Activated B cell treated with CpG ODN at 0.5 μM for 24 hours (primary cell): ENCODE measurements at regions of chr5 and their contacts with region 1.

Region 1: DNA sequence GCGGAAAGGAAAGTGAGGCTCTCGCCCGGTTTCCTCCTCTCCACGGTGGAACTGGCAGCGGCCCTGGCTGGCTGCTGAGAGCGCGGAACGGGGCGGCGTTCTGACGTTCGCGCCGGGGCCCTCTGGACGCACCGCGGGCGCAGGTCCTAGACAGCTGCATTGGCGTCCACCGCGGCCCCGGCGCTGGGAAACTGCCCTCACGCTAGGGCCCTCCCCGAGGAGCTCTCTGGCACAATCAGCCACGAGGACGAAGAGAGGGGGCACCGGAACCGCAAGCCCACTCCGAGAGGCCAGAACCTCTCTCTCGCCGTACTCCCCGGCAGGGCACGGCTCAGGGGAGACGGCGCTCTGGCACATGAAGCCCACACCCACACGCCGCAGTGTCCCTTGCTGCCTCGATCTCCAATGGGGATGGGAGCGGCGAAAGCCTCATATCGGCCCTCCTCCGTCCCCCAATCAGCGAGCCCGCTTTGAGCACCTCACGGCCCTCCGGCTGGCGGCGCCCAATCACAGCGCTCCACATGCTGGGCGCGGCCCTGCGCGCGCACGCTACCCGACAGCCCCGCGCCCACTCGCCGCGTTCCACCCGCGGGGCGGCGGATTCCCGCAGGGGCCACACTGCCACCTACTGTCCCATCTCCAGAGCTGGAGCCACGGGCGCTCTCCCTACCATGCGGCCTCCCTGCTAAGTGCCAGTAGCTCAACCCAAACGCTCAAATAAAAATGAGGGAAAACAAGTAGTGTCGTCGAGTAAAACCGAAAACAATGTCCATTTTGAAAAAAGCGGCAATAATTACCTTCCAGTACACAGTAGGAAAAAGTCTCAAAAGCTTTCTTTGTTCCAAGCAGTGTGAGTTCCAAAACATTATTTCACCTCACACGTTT is 11.8 kb downstream of the MRPS27 start:
- DNase-seq: peak; percentile 95
- ATAC-seq: peak; percentile 95
- H3K4me3 Mint-ChIP-seq: peak overlapping the region; percentile 92
- H3K27ac Mint-ChIP-seq: peak overlapping the region; percentile 97
- H3K4me1 Mint-ChIP-seq: peaks cover 46% of the 10 kb centered on the region
- H3K27me3 Mint-ChIP-seq: no peaks in the 10 kb centered on the region
- CTCF ChIP-seq: peak; percentile 24

Region 2: GRCh38 chr5:71455427-71456361 is 852.5 kb before region 1 on chr5 and contains the start of gene BDP1:
- CTCF ChIA-PET with region 1: no interaction called
- POLR2A ChIA-PET with region 1: interaction called, 5 read pairs
- intact Hi-C with region 1: loop called (anchors 5 kb)
- DNase-seq: peak; percentile 96
- ATAC-seq: peak; percentile 84
- H3K4me3 Mint-ChIP-seq: peak within 1 kb of the TSS; percentile 97
- H3K27ac Mint-ChIP-seq: peak within 1 kb of the TSS; percentile 97
- H3K4me1 Mint-ChIP-seq: peaks cover 23% of the 10 kb centered on the region
- H3K27me3 Mint-ChIP-seq: peaks cover 7% of the 10 kb centered on the region
- CTCF ChIP-seq: no peak
- total RNA-seq, gene BDP1: 46.2 and 50.4 TPM in 2 replicates

Region 3: DNA sequence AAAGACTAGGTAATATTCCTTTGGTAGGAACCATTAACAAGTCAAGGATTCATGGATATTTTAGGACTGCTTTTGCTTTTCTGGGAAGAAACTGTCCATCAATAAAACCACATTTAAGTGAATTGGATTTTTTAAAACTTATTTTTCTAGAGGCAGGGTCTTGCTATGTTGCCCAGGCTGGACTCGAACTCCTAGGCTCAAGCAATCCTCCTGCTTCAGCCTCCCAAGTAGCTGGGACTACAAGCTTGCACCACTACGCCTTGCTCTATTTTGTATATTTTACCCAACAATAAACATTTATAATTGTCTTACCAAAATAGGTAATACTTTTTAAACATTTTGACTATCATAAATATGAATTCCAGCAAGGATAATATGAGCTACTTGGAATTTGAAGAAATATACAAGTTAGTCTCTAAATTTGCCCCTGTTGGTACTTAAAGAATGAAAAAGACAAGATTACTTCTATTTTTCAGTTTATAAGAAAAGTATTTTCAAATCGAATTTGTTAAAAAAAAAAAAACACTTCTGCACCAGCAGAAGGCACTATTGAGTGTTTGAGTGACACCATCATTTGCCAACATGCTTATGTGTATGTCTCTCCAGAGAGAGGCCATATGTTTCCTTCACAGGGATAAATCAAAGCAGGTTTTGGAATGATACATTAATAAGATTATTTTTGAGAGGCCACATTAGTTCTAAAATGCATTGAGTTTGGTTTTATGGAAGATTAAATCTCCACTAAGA is 649.1 kb before region 1 on chr5:
- CTCF ChIA-PET with region 1: interaction called, 3 read pairs
- POLR2A ChIA-PET with region 1: no interaction called
- intact Hi-C with region 1: loop called (anchors 10 kb)
- DNase-seq: no peak
- ATAC-seq: no peak
- H3K4me3 Mint-ChIP-seq: no peak overlapping the region
- H3K27ac Mint-ChIP-seq: no peak overlapping the region
- H3K4me1 Mint-ChIP-seq: no peaks in the 10 kb centered on the region
- H3K27me3 Mint-ChIP-seq: no peaks in the 10 kb centered on the region
- CTCF ChIP-seq: no peak

Region 4: GRCh38 chr5:72234265-72234700 is 73.9 kb before region 1 on chr5:
- CTCF ChIA-PET with region 1: interaction called, 3 read pairs
- POLR2A ChIA-PET with region 1: interaction called, 3 read pairs
- intact Hi-C with region 1: loop called (anchors 2 kb)
- DNase-seq: no peak
- ATAC-seq: peak; percentile 56
- H3K4me3 Mint-ChIP-seq: no peak overlapping the region
- H3K27ac Mint-ChIP-seq: no peak overlapping the region
- H3K4me1 Mint-ChIP-seq: peaks cover 22% of the 10 kb centered on the region
- H3K27me3 Mint-ChIP-seq: no peaks in the 10 kb centered on the region
- CTCF ChIP-seq: no peak

Region 5: GRCh38 chr5:72280581-72281170 is 27.5 kb before region 1 on chr5:
- CTCF ChIA-PET with region 1: interaction called, 6 read pairs
- POLR2A ChIA-PET with region 1: interaction called, 6 read pairs
- intact Hi-C with region 1: loop called (anchors 1 kb)
- DNase-seq: no peak
- ATAC-seq: peak; percentile 28
- H3K4me3 Mint-ChIP-seq: no peak overlapping the region
- H3K27ac Mint-ChIP-seq: no peak overlapping the region
- H3K4me1 Mint-ChIP-seq: peaks cover 15% of the 10 kb centered on the region
- H3K27me3 Mint-ChIP-seq: no peaks in the 10 kb centered on the region
- CTCF ChIP-seq: no peak

Region 6: DNA sequence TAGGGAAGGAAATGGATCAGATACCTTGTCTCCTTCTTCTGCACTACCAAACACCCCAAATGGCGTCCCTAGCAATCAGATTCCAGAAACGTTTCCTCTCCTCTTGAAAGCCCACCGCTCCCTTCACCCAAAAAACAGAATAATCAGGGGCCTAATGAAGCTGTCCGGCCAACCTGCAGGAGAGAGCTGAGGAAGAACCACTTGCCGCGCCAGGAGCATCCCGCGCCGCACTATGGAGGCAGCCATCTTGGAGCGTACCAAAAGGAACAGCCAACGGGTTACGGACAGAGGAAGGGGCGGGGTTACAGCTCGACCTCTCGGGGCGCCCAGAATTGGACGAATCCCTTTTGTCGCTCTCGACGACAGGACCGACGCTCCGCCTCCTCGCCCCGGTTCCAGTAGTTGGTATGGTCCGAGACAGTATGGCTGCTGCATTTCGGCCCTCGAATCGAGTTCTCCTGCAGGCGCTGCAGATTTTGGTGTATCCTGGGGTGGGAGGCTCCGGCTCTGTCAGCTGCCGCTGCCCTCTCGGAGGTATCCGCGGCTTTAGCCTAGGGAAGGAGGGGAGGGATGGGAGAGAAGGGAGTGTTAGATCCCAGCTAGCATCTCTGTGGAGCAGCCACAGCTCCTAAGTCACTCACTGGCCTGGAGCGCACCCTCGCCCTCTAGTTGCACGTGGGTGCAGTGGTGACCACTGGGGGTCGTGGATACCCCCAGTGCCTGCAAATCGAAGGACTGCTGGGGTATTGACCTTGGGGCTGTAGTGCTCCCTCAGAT is 12.0 kb after region 1 on chr5 and contains the starts of genes MRPS27 and PTCD2:
- CTCF ChIA-PET with region 1: interaction called, 28 read pairs
- POLR2A ChIA-PET with region 1: interaction called, 74 read pairs
- intact Hi-C with region 1: loop called (anchors 1 kb)
- DNase-seq: peak; percentile 79
- ATAC-seq: peak; percentile 99
- H3K4me3 Mint-ChIP-seq: peak within 1 kb of the TSS; percentile 98
- H3K27ac Mint-ChIP-seq: peak within 1 kb of the TSS; percentile 93
- H3K4me1 Mint-ChIP-seq: peaks cover 25% of the 10 kb centered on the region
- H3K27me3 Mint-ChIP-seq: no peaks in the 10 kb centered on the region
- CTCF ChIP-seq: no peak
- total RNA-seq, gene MRPS27: 69.2 and 71.6 TPM in 2 replicates
- total RNA-seq, gene PTCD2: 6.2 and 8.9 TPM in 2 replicates

Region 7: GRCh38 chr5:72883864-72884263 is 575.7 kb after region 1 on chr5:
- CTCF ChIA-PET with region 1: no interaction called
- POLR2A ChIA-PET with region 1: no interaction called
- intact Hi-C with region 1: no loop called
- DNase-seq: no peak
- ATAC-seq: no peak
- H3K4me3 Mint-ChIP-seq: no peak overlapping the region
- H3K27ac Mint-ChIP-seq: no peak overlapping the region
- H3K4me1 Mint-ChIP-seq: peaks cover 3% of the 10 kb centered on the region
- H3K27me3 Mint-ChIP-seq: no peaks in the 10 kb centered on the region
- CTCF ChIP-seq: no peak